ENCODE measurements at regions of chr15 and their contacts with region 1.

Region 1: DNA sequence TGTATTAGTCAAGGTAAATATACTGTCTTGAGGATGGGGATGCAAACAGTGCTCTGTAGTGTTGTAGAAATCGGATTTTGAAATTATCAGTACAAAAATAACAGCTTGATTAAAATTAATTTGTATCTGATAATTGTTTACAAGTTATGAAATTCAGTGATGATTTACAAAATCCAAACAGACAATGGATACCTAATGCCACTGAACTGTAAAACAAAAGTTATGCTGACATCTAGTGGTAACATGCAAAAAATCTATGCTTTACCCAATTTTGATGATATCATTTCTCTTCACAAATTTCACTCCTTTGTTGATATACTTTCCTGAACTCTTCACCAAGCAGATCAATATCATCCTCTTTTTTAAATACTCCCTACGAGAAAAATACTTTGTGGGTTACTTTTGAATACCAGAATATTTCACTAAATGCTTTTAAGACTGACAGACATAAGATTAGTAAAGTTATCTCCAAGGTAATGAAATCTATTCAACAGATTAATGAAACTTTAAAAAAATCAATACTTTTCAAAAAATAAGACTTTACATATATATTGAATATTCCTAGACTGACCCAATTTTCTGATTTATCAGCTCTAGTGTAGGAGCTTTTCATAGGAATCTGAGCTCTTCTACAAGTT is 36.0 kb downstream of the MNS1 start:
- DNase-seq: peak; percentile 39
- ATAC-seq: peak; percentile 71
- H3K4me3 ChIP-seq: no peak overlapping the region
- H3K27ac ChIP-seq: no peak overlapping the region
- H3K4me1 ChIP-seq: no peaks in the 10 kb centered on the region
- H3K27me3 ChIP-seq: no peaks in the 10 kb centered on the region
- CTCF ChIP-seq: peak; percentile 64
- POLR2A ChIP-seq: no peak
- RAD21 ChIP-seq: peak; percentile 56

Region 2: GRCh38 chr15:55737373-55737772 is 691.6 kb before region 1 on chr15:
- CTCF ChIA-PET with region 1: no interaction called
- POLR2A ChIA-PET with region 1: no interaction called
- dilution Hi-C with region 1: no loop called
- in situ Hi-C with region 1: no loop called
- intact Hi-C with region 1: loop called (anchors 5 kb)
- DNase-seq: peak; percentile 5
- ATAC-seq: no peak
- H3K4me3 ChIP-seq: no peak overlapping the region
- H3K27ac ChIP-seq: no peak overlapping the region
- H3K4me1 ChIP-seq: peaks cover 3% of the 10 kb centered on the region; the same call in 1 of the 2 replicates
- H3K27me3 ChIP-seq: peaks cover 10% of the 10 kb centered on the region
- CTCF ChIP-seq: no peak
- POLR2A ChIP-seq: no peak
- RAD21 ChIP-seq: no peak

Region 3: DNA sequence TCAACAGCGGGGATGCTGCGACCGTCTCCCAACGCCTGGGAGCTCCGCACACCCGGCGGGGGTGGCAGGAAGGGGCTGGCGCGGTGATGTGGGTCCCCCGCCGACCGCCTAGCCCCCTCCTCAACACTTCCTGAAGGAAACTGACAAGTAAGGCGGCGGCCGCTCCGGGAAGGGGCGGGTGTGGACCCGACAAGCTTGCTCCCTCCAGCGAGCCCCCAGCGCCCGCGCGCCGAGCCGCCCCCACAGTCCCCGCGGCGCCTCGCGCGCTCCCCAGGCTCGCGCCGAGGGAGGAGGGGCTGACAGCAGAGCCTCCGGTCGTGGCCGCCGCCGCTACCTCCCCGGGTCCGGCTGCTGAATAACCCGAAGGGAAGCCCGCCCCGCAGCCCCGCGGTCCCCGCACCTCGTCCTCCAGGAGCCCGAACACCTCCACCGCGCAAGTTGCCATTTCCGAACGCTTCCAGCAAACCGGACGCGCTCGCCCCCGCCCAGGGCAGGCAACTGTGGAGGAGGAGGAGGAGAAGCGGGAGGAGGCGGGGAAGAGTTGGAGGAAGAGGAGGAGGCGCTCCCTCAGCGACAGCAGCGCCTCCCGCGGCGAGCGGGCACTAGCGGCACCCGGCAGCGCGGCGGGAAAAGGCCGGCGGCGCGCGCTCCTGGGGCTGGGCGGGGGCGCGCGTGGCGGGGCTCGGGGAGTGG is 435.7 kb before region 1 on chr15 and contains the start of gene NEDD4:
- CTCF ChIA-PET with region 1: no interaction called
- POLR2A ChIA-PET with region 1: no interaction called
- dilution Hi-C with region 1: no loop called
- in situ Hi-C with region 1: no loop called
- intact Hi-C with region 1: loop called (anchors 5 kb)
- DNase-seq: peak; percentile 86
- ATAC-seq: peak; percentile 96
- H3K4me3 ChIP-seq: peak within 1 kb of the TSS; percentile 86
- H3K27ac ChIP-seq: peak within 1 kb of the TSS; percentile 96
- H3K4me1 ChIP-seq: peaks cover 4% of the 10 kb centered on the region
- H3K27me3 ChIP-seq: no peaks in the 10 kb centered on the region
- CTCF ChIP-seq: peak; percentile 61
- POLR2A ChIP-seq: no peak
- RAD21 ChIP-seq: no peak; the same call in 1 of the 2 replicates
- total RNA-seq, gene NEDD4: 80.7 and 106 TPM in 2 replicates

Region 4: GRCh38 chr15:56146756-56147155 is 282.2 kb before region 1 on chr15:
- CTCF ChIA-PET with region 1: no interaction called
- POLR2A ChIA-PET with region 1: no interaction called
- dilution Hi-C with region 1: no loop called
- in situ Hi-C with region 1: no loop called
- intact Hi-C with region 1: loop called (anchors 5 kb)
- DNase-seq: peak; percentile 37
- ATAC-seq: peak; percentile 47
- H3K4me3 ChIP-seq: no peak overlapping the region
- H3K27ac ChIP-seq: no peak overlapping the region
- H3K4me1 ChIP-seq: 0 out of 2 replicates have a peak, but pooled peaks cover 3% of the 10 kb centered on the region
- H3K27me3 ChIP-seq: no peaks in the 10 kb centered on the region
- CTCF ChIP-seq: no peak
- POLR2A ChIP-seq: no peak
- RAD21 ChIP-seq: no peak